Ovary (tissue), 10 donors: ENCODE measurements at regions of chr18 and their contacts with region 1.

Region 1: GRCh38 chr18:55243857-55244256 is 284.6 kb upstream of the CCDC68 start:
- DNase-seq: peak in 4 of 5 donors; percentile 45 to 67 (median 61)
- H3K4me3 ChIP-seq: no peak overlapping the region
- H3K27ac ChIP-seq: peak overlapping the region in 1 of 2 donors; percentile 59
- H3K4me1 ChIP-seq: peaks cover 13% of the 10 kb centered on the region
- H3K27me3 ChIP-seq: no peaks in the 10 kb centered on the region
- CTCF ChIP-seq: no peak
- EP300 ChIP-seq: no peak
- POLR2A ChIP-seq: no peak

Region 2: DNA sequence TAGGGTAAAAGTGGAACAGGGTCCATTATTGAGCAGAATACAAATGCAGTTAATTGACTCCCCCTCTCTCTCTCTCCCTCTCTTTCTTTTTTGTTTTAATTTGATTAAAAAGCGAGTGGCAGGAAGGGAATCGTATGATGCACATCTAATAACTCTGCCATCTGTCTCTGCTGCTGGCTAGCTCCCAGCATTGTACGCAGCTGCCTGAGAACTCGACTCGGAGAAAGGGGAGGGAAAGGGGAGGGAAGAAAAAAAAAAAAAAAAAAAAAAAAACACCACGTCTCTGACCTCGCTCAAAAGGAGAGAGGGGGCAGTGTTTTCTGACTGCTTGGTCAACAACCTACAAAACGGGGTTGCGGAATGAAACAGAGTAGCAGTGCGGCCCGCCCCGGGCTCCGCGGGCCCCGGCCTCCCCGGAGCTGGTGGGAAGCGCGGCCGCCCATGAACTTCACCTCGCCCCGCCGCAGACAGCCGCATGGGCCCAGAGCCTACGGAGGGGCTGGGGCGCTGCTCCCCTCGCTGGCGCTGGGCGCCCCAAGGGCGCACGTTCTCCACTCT is 78.4 kb after region 1 on chr18:
- intact Hi-C with region 1: loop called in 3 of 4 experiments (anchors 5 kb)
- DNase-seq: peak; percentile 80 to 90 (median 86)
- H3K4me3 ChIP-seq: peak overlapping the region; percentile 54
- H3K27ac ChIP-seq: peak overlapping the region; percentile 96 to 97
- H3K4me1 ChIP-seq: peaks cover 3% of the 10 kb centered on the region
- H3K27me3 ChIP-seq: no peaks in the 10 kb centered on the region
- CTCF ChIP-seq: peak in 1 of 3 donors; percentile 14
- EP300 ChIP-seq: no peak
- POLR2A ChIP-seq: peak; percentile 45

Region 3: DNA sequence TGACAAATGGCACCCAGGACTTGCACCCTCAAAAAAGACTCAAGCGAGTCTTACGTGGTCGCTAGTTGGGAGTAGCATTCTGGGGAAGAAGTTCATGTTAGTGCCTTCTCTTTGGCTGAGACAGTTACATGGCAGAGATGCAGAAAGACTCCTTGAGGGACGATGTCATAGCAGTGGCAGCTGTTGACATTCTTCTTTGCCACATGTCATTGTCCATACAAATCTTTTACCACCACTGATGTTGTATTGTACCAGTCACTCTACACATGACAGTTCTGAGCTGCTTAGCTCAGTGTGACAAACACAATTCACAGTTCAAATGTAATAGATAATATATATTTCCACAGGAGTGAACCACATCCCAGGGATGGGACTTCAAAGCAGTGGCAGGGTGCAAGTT is 147.0 kb after region 1 on chr18:
- intact Hi-C with region 1: loop called in 1 of 4 experiments (anchors 10 kb)
- DNase-seq: no peak
- H3K4me3 ChIP-seq: no peak overlapping the region
- H3K27ac ChIP-seq: no peak overlapping the region
- H3K4me1 ChIP-seq: no peaks in the 10 kb centered on the region
- H3K27me3 ChIP-seq: no peaks in the 10 kb centered on the region
- CTCF ChIP-seq: no peak
- EP300 ChIP-seq: no peak
- POLR2A ChIP-seq: no peak

Region 4: GRCh38 chr18:55405893-55406406 is 162.1 kb after region 1 on chr18:
- intact Hi-C with region 1: loop called in 3 of 4 experiments (anchors 10 kb)
- DNase-seq: peak; percentile 83 to 96 (median 92)
- H3K4me3 ChIP-seq: no peak overlapping the region
- H3K27ac ChIP-seq: peak overlapping the region in 1 of 2 donors; percentile 76
- H3K4me1 ChIP-seq: peaks cover 4% of the 10 kb centered on the region
- H3K27me3 ChIP-seq: no peaks in the 10 kb centered on the region
- CTCF ChIP-seq: no peak
- EP300 ChIP-seq: no peak
- POLR2A ChIP-seq: no peak

Region 5: DNA sequence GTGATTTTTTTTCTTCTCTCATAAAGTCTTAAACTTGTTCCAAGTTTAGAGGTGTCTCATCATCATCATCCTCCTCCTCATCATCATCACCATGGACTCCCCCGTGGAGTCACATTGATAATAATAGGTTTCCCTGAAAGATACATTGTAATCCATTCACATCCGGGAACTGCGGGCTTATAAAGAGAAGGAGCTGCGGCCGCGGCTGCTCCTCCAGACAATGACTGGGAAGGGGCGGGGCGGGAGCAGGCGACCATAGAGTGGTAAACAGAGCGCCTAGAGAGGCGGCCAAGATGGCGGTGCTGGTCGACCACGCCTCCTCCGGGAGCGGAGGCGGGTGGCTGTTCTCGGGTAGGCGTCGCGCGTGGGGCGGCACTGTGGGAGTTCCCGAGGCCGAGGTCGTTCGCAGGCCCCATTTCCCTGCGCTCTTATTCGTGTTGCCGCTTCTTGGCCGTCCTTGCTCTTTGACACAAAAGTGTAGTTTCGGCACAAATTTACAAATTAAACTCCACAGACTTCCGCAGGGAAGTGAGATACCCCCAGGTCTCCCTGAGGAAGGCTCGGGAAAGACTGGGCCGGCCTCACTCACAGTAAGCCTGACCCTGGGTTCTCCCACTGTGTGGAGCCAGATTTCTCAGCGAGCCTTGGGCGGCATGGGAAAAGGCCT is 345.9 kb after region 1 on chr18:
- intact Hi-C with region 1: loop called in 1 of 4 experiments (anchors 10 kb)
- DNase-seq: peak; percentile 97 to 99 (median 97)
- H3K4me3 ChIP-seq: peak overlapping the region; percentile 42
- H3K27ac ChIP-seq: peak overlapping the region; percentile 16 to 79
- H3K4me1 ChIP-seq: no peaks in the 10 kb centered on the region
- H3K27me3 ChIP-seq: no peaks in the 10 kb centered on the region
- CTCF ChIP-seq: no peak
- EP300 ChIP-seq: no peak
- POLR2A ChIP-seq: peak; percentile 42

Region 6: DNA sequence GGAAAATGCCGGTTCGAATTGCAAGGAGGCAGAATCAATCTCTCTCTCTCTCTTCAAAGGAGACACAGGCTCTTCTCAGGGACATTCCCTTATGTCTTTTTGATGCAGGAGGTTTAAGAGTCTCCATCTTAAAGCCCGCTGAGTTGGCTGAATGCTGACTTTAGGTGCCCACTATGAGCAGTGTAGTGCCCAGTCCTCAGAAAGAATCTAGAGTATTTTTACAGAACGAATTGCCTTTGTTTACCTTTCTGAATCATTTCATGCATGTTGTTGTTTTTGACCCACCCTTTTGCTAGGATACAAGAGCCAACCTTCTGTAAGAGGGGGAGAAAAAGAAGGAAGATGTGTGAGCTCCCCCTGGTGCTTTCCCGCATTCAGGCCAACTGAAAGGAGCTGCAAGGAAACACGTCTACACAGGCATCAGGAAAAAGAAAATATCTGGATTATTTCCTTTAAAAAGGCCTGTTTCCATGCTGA is 537.7 kb after region 1 on chr18:
- intact Hi-C with region 1: loop called in 1 of 4 experiments (anchors 10 kb)
- DNase-seq: peak in 4 of 5 donors; percentile 31 to 58 (median 46)
- H3K4me3 ChIP-seq: no peak overlapping the region
- H3K27ac ChIP-seq: no peak overlapping the region
- H3K4me1 ChIP-seq: no peaks in the 10 kb centered on the region
- H3K27me3 ChIP-seq: no peaks in the 10 kb centered on the region
- CTCF ChIP-seq: peak in 2 of 3 donors; percentile 21 to 44
- EP300 ChIP-seq: no peak
- POLR2A ChIP-seq: no peak

Region 7: DNA sequence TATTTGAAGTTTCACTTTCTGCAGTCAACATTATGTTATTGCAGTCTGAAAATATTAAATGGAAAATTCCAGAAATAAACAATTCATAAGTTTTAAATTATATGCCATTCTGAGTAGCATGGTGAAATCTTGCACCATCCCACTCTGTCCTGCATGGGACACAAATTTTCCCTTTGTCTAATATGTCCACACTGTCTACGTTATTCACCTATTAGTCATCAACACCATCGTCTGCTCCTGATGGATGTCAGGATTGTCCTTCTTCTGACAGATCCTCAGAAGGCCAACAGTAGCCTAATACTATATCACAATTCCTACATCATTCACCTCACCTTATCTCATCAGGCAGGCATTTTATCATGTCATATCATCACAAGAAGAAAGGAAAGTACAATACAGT is 1231.4 kb after region 1 on chr18:
- intact Hi-C with region 1: no loop called
- DNase-seq: no peak
- H3K4me3 ChIP-seq: no peak overlapping the region
- H3K27ac ChIP-seq: no peak overlapping the region
- H3K4me1 ChIP-seq: peaks cover 6% of the 10 kb centered on the region
- H3K27me3 ChIP-seq: no peaks in the 10 kb centered on the region
- CTCF ChIP-seq: no peak
- EP300 ChIP-seq: no peak
- POLR2A ChIP-seq: no peak